ENCODE measurements at regions of chr10 and their contacts with region 1.

Region 1: DNA sequence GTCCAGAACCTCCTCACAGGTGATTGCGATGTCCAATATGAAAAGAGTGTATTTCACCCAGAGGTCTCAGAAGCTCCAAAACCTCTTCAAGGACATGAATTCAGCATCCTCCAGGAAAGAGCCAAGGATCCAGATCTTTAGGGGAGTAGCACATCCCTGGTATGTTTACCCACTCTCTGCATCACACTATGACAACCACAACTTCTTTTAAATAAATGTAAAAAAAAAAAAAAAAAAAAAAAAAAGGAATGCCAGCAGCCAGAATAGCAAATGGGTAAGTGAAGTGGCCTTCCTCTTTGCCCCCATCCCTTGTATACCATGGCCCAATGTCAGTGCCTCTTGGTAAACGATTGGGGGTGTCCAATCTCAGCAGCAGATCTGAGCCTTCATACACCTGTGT is 67.3 kb downstream of the SORBS1 start:
- DNase-seq: no peak
- H3K4me3 Mint-ChIP-seq: no peak overlapping the region
- H3K27ac Mint-ChIP-seq: no peak overlapping the region
- H3K4me1 Mint-ChIP-seq: peaks cover 8% of the 10 kb centered on the region
- H3K27me3 Mint-ChIP-seq: no peaks in the 10 kb centered on the region
- CTCF ChIP-seq: no peak

Region 2: DNA sequence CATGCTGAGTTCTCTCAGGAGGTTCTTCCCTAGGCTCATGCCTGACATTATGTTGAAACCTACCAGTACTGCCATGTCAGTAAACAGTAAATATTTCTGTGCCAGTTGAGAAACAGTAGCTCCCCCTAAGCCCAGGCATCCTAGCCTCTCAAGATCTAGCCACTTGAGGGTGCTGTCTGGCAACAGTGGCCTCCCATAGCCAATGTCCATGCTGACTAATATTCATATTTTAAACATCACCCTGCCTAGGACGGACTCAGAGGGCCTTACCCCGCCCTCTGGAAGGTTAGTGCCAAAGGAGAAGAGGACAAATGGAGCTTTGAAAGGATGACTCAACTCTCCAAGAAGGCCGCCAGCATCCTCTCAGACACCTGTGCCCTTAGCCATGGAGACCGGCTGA is 292.1 kb before region 1 on chr10:
- CTCF ChIA-PET with region 1: no interaction called
- intact Hi-C with region 1: no loop called
- DNase-seq: peak; percentile 5
- H3K4me3 Mint-ChIP-seq: no peak overlapping the region
- H3K27ac Mint-ChIP-seq: no peak overlapping the region
- H3K4me1 Mint-ChIP-seq: no peaks in the 10 kb centered on the region
- H3K27me3 Mint-ChIP-seq: peaks cover 9% of the 10 kb centered on the region
- CTCF ChIP-seq: no peak

Region 3: GRCh38 chr10:95547791-95548435 is 54.1 kb after region 1 on chr10:
- CTCF ChIA-PET with region 1: interaction called, 13 read pairs
- intact Hi-C with region 1: no loop called
- DNase-seq: no peak
- H3K4me3 Mint-ChIP-seq: no peak overlapping the region
- H3K27ac Mint-ChIP-seq: no peak overlapping the region
- H3K4me1 Mint-ChIP-seq: peaks cover 7% of the 10 kb centered on the region
- H3K27me3 Mint-ChIP-seq: no peaks in the 10 kb centered on the region
- CTCF ChIP-seq: no peak

Measured in Calu3 (cell line).